ENCODE measurements at regions of chr12 and their contacts with region 1.

Region 1: GRCh38 chr12:92551853-92552397 is 150.9 kb upstream of the PLEKHG7 start:
- DNase-seq: peak; percentile 83
- H3K4me3 Mint-ChIP-seq: no peak overlapping the region
- H3K27ac Mint-ChIP-seq: no peak overlapping the region
- H3K4me1 Mint-ChIP-seq: peaks cover 38% of the 10 kb centered on the region
- H3K27me3 Mint-ChIP-seq: no peaks in the 10 kb centered on the region

Region 2: GRCh38 chr12:92136965-92137721 is 414.8 kb before region 1 on chr12:
- CTCF ChIA-PET with region 1: no interaction called
- intact Hi-C with region 1: loop called (anchors 5 kb)
- DNase-seq: no peak
- H3K4me3 Mint-ChIP-seq: peak overlapping the region; percentile 100
- H3K27ac Mint-ChIP-seq: peak overlapping the region; percentile 99
- H3K4me1 Mint-ChIP-seq: peaks cover 58% of the 10 kb centered on the region
- H3K27me3 Mint-ChIP-seq: no peaks in the 10 kb centered on the region

Region 3: GRCh38 chr12:92185052-92185451 is 366.9 kb before region 1 on chr12:
- CTCF ChIA-PET with region 1: no interaction called
- intact Hi-C with region 1: loop called (anchors 1 kb)
- DNase-seq: peak; percentile 62
- H3K4me3 Mint-ChIP-seq: peak overlapping the region; percentile 36
- H3K27ac Mint-ChIP-seq: peak overlapping the region; percentile 89
- H3K4me1 Mint-ChIP-seq: peaks cover 64% of the 10 kb centered on the region
- H3K27me3 Mint-ChIP-seq: no peaks in the 10 kb centered on the region

Region 4: GRCh38 chr12:92396647-92397252 is 155.2 kb before region 1 on chr12:
- CTCF ChIA-PET with region 1: no interaction called
- intact Hi-C with region 1: no loop called
- DNase-seq: peak; percentile 39
- H3K4me3 Mint-ChIP-seq: no peak overlapping the region
- H3K27ac Mint-ChIP-seq: peak overlapping the region; percentile 73
- H3K4me1 Mint-ChIP-seq: peaks cover 97% of the 10 kb centered on the region
- H3K27me3 Mint-ChIP-seq: no peaks in the 10 kb centered on the region

Region 5: GRCh38 chr12:92516277-92516600 is 35.7 kb before region 1 on chr12:
- CTCF ChIA-PET with region 1: interaction called, 3 read pairs
- intact Hi-C with region 1: loop called (anchors 1 kb)
- DNase-seq: peak; percentile 72
- H3K4me3 Mint-ChIP-seq: peak overlapping the region; percentile 61
- H3K27ac Mint-ChIP-seq: peak overlapping the region; percentile 92
- H3K4me1 Mint-ChIP-seq: peaks cover 46% of the 10 kb centered on the region
- H3K27me3 Mint-ChIP-seq: no peaks in the 10 kb centered on the region

Region 6: DNA sequence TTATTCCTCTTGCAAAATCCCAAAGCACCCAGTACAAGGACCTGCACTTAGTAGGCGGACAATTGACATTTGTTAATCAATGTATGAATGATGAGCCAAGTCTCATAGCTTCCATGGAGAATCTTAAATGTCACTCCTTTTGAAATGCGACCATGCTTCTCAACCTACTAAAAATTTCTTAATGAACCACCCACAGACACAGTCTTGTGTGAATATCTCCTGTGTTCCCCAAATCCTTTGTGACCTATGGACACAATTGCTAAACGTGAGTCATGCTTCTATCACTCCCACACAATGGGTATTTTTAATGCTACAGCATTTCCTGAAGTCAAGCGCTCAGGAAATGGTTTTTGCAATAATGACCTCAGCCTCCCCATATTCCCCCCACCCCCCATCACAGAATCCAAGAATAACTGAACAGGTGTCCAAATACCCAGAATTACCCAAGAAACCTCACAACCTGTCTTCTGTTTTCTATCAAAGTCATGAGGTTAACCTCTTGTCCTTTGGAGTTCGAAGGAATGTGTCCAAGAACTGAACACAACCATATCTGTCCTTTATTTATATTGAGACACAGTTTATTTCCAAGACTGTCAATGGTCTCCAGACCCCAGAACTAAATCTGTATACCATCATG is 12.7 kb before region 1 on chr12:
- CTCF ChIA-PET with region 1: interaction called, 3 read pairs
- intact Hi-C with region 1: loop called (anchors 1 kb)
- DNase-seq: peak; percentile 65
- H3K4me3 Mint-ChIP-seq: no peak overlapping the region
- H3K27ac Mint-ChIP-seq: peak overlapping the region; percentile 97
- H3K4me1 Mint-ChIP-seq: peaks cover 56% of the 10 kb centered on the region
- H3K27me3 Mint-ChIP-seq: no peaks in the 10 kb centered on the region

Region 7: DNA sequence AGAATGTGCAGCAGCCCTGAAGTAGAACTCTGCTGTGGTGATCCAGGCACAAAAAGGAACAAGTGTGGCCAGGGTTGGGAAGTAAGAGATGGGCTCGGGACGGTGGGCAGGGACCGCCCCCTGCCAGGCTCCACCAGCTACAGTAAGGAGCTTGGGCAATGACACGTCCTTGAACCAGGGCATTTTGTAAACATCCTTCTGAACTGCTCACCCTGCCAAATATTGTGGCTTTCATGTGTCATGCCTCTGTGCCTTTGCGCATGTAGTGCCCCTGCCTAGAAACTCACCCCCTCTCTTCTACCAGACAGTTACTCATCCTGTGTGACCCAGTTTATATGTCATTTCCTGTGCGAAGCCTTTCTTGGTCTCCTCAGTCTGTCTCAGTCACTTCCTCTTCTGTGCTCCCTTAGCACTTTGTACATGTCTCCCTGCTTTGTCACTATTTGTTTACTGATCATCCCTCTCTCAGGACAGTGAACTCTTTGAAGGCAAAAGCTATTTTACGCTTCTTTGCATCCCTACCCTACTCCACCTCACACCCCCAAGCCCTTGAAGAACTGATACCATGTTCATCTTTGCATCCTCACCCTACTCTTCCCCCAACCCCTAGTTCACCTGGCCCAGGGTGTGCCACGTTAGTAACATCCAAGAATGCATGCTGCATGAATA is 41.9 kb after region 1 on chr12:
- CTCF ChIA-PET with region 1: no interaction called
- intact Hi-C with region 1: loop called (anchors 1 kb)
- DNase-seq: peak; percentile 87
- H3K4me3 Mint-ChIP-seq: peak overlapping the region; percentile 55
- H3K27ac Mint-ChIP-seq: peak overlapping the region; percentile 96
- H3K4me1 Mint-ChIP-seq: peaks cover 78% of the 10 kb centered on the region
- H3K27me3 Mint-ChIP-seq: no peaks in the 10 kb centered on the region

Region 8: GRCh38 chr12:94109160-94109559 is 1557.2 kb after region 1 on chr12:
- CTCF ChIA-PET with region 1: no interaction called
- intact Hi-C with region 1: no loop called
- DNase-seq: peak; percentile 62
- H3K4me3 Mint-ChIP-seq: no peak overlapping the region
- H3K27ac Mint-ChIP-seq: no peak overlapping the region
- H3K4me1 Mint-ChIP-seq: peaks cover 12% of the 10 kb centered on the region
- H3K27me3 Mint-ChIP-seq: no peaks in the 10 kb centered on the region

Measured in activated naive CD4-positive, alpha-beta T cell treated with anti-CD3 and anti-CD28 coated beads for 36 hours (primary cell).